ENCODE measurements at regions of chr6 and their contacts with region 1.

Region 1: GRCh38 chr6:34757687-34758274 is 476 bp downstream of the SNRPC start:
- DNase-seq: no peak
- ATAC-seq: no peak
- H3K4me3 ChIP-seq: peak overlapping the region; percentile 67
- H3K4me3 Mint-ChIP-seq: no peak overlapping the region
- H3K27ac ChIP-seq: peak overlapping the region; percentile 84 to 88
- H3K27ac Mint-ChIP-seq: no peak overlapping the region
- H3K4me1 ChIP-seq: peaks cover 19% of the 10 kb centered on the region
- H3K4me1 Mint-ChIP-seq: peaks cover 9% of the 10 kb centered on the region
- H3K27me3 ChIP-seq: no peaks in the 10 kb centered on the region
- H3K27me3 Mint-ChIP-seq: no peaks in the 10 kb centered on the region
- CTCF ChIP-seq: no peak

Region 2: DNA sequence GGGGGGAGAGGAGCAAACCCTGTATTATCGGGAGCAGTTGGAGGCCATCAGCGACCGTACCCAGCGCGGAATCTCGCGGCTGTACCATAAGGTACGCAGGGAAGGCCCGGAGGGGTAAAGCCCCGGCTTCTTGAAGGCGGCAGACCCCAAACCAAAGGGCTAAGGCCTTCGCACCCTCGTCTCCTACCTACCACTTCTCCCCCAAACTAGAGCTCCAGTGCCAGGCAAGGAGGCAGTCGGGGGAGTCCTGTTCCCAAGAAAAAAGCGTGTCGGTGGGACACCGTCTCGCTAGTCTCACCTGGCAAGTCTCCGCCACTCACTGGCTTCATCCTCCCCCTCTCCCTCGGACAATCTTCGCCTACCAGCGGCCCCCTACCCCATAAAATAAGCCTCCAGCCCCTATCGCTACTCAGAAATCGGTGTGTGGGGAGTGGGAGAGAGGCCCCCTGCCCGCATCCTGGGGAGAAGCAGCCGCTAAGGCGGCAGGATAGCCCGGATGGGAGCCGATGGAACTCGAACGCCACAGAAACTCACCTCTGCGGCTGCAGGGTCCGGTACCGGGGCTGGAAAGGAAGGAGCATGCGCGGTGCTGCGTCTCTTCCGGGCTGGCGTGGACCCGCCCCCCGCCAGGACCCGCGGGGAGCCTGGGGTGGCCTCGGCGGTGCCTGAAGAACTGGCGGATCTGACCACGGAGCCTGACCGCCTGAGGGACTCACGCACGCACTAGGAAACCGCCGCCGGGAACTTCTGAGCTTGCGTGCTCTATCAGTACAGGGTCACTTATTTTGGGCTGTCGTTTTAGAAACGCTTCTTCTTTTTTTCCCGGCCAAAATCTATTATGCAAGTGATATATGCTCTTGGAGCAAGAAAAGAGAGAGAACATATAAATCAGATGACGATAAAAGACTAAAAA is 332.0 kb before region 1 on chr6 and contains the start of gene RPS10:
- CTCF ChIA-PET with region 1: no interaction called
- POLR2A ChIA-PET with region 1: interaction called, 3 read pairs
- intact Hi-C with region 1: loop called in 1 of 2 experiments (anchors 2 kb)
- DNase-seq: peak; percentile 81 to 96 (median 88)
- ATAC-seq: peak; percentile 97
- H3K4me3 ChIP-seq: peak within 1 kb of the TSS; percentile 75
- H3K4me3 Mint-ChIP-seq: peak within 1 kb of the TSS; percentile 99
- H3K27ac ChIP-seq: peak within 1 kb of the TSS; percentile 73 to 74
- H3K27ac Mint-ChIP-seq: peak within 1 kb of the TSS; percentile 97
- H3K4me1 ChIP-seq: peaks cover 37% of the 10 kb centered on the region
- H3K4me1 Mint-ChIP-seq: peaks cover 39% of the 10 kb centered on the region
- H3K27me3 ChIP-seq: no peaks in the 10 kb centered on the region
- H3K27me3 Mint-ChIP-seq: no peaks in the 10 kb centered on the region
- CTCF ChIP-seq: no peak
- total RNA-seq, gene RPS10: 3,088 to 3,122 TPM

Region 3: DNA sequence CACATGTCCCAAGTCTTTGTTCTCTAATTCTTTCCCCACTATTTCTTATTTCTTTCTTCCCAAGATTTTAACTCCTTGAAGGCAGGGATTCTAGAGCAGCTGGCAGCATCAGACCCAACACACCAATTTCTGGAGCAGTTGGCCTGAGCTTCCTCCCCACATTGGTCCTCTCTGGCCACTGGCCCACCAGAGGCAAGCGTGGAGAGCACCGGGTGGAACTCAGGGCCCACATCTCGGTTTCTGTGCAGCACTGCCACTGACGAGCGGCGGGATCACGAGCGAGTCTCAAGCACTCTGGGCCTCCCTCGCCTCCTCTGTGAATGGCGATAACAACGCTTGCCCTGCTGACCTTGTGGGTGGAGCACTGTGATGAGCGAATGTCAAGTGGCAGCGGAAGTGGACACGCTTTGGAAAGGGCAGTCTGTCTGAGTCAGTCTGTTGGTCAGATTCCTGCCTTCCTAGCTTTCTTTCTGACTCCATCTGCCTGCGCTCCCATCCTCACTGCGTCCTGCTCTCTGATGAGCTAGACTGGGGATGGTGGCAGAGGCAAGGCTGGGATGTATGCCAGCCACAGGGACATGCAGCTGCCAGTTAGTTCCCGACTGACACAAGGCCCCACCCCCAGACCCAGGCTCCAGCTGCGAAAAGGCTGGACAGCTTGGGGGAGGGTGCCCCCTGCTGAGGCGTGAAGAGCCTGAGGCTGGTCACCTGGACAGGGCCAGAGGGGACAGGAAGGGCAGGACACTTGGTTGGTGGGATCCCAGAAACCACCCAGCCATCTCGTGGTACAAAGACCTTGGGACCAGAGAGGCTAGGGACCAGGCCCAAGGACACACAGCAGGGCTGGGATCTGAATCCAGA is 197.2 kb before region 1 on chr6:
- CTCF ChIA-PET with region 1: no interaction called
- POLR2A ChIA-PET with region 1: no interaction called
- intact Hi-C with region 1: no loop called
- DNase-seq: no peak
- ATAC-seq: no peak
- H3K4me3 ChIP-seq: no peak overlapping the region
- H3K4me3 Mint-ChIP-seq: no peak overlapping the region
- H3K27ac ChIP-seq: no peak overlapping the region
- H3K27ac Mint-ChIP-seq: no peak overlapping the region
- H3K4me1 ChIP-seq: no peaks in the 10 kb centered on the region
- H3K4me1 Mint-ChIP-seq: no peaks in the 10 kb centered on the region
- H3K27me3 ChIP-seq: no peaks in the 10 kb centered on the region
- H3K27me3 Mint-ChIP-seq: no peaks in the 10 kb centered on the region
- CTCF ChIP-seq: no peak

Region 4: GRCh38 chr6:34656378-34657036 is 101.3 kb before region 1 on chr6:
- CTCF ChIA-PET with region 1: no interaction called
- POLR2A ChIA-PET with region 1: interaction called, 24 read pairs
- intact Hi-C with region 1: no loop called
- DNase-seq: peak in 6 of 14 experiments; percentile 6 to 60 (median 53)
- ATAC-seq: peak; percentile 61
- H3K4me3 ChIP-seq: peak overlapping the region; percentile 57
- H3K4me3 Mint-ChIP-seq: peak overlapping the region; percentile 90
- H3K27ac ChIP-seq: peak overlapping the region; percentile 55 to 85
- H3K27ac Mint-ChIP-seq: peak overlapping the region; percentile 84
- H3K4me1 ChIP-seq: peaks cover 31% of the 10 kb centered on the region
- H3K4me1 Mint-ChIP-seq: peaks cover 64% of the 10 kb centered on the region
- H3K27me3 ChIP-seq: no peaks in the 10 kb centered on the region
- H3K27me3 Mint-ChIP-seq: no peaks in the 10 kb centered on the region
- CTCF ChIP-seq: no peak

Region 5: GRCh38 chr6:34696739-34697543 is 60.8 kb before region 1 on chr6 and contains the start of gene ILRUN:
- CTCF ChIA-PET with region 1: no interaction called
- POLR2A ChIA-PET with region 1: interaction called, 6 read pairs
- intact Hi-C with region 1: loop called (anchors 1 kb)
- DNase-seq: peak; percentile 94 to 98 (median 96)
- ATAC-seq: peak; percentile 85
- H3K4me3 ChIP-seq: peak within 1 kb of the TSS; percentile 99
- H3K4me3 Mint-ChIP-seq: peak within 1 kb of the TSS; percentile 98
- H3K27ac ChIP-seq: peak within 1 kb of the TSS; percentile 80 to 87
- H3K27ac Mint-ChIP-seq: peak within 1 kb of the TSS; percentile 98
- H3K4me1 ChIP-seq: peaks cover 33% of the 10 kb centered on the region
- H3K4me1 Mint-ChIP-seq: peaks cover 53% of the 10 kb centered on the region
- H3K27me3 ChIP-seq: no peaks in the 10 kb centered on the region
- H3K27me3 Mint-ChIP-seq: no peaks in the 10 kb centered on the region
- CTCF ChIP-seq: no peak
- total RNA-seq, gene ILRUN: 44.9 to 49.4 TPM

Region 6: GRCh38 chr6:34887753-34888513 is 130.2 kb after region 1 on chr6 and contains the start of gene TAF11:
- CTCF ChIA-PET with region 1: no interaction called
- POLR2A ChIA-PET with region 1: interaction called, 42 read pairs
- intact Hi-C with region 1: loop called (anchors 1 to 2 kb)
- DNase-seq: peak; percentile 78 to 96 (median 87)
- ATAC-seq: peak; percentile 69
- H3K4me3 ChIP-seq: peak within 1 kb of the TSS; percentile 98
- H3K4me3 Mint-ChIP-seq: peak within 1 kb of the TSS; percentile 97
- H3K27ac ChIP-seq: peak within 1 kb of the TSS; percentile 90 to 93
- H3K27ac Mint-ChIP-seq: peak within 1 kb of the TSS; percentile 97
- H3K4me1 ChIP-seq: peaks cover 36% of the 10 kb centered on the region
- H3K4me1 Mint-ChIP-seq: peaks cover 62% of the 10 kb centered on the region
- H3K27me3 ChIP-seq: no peaks in the 10 kb centered on the region
- H3K27me3 Mint-ChIP-seq: no peaks in the 10 kb centered on the region
- CTCF ChIP-seq: no peak
- total RNA-seq, gene TAF11: 31.5 to 38.1 TPM

Measured in CD4-positive, alpha-beta T cell (primary cell).